BJ (cell line): ENCODE measurements at regions of chr6 and their contacts with region 1.

Region 1: DNA sequence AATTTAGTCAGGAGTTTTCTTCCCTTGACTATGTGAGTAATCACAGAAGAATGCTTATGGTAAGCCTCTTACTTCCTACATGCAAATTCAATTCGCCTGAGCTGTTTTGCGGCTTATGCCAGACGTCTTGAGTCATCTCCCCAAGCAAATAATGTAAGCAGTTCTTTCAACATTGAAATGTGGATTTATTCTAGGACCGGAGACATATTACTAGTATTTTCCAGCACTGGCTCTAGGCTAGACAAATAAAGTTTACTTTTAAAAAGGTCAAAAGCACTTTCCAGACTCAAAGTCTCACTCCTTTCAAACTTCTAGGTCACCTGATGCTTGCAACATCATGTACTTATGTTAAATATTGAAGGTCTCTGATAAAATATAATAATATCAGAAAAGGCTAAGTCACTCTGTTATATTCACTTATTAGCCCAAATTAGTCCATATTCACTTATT is 38.1 kb upstream of the NOX3 start:
- DNase-seq: peak; percentile 98
- H3K4me3 ChIP-seq: no peak overlapping the region
- H3K27me3 ChIP-seq: no peaks in the 10 kb centered on the region
- CTCF ChIP-seq: no peak

Region 2: DNA sequence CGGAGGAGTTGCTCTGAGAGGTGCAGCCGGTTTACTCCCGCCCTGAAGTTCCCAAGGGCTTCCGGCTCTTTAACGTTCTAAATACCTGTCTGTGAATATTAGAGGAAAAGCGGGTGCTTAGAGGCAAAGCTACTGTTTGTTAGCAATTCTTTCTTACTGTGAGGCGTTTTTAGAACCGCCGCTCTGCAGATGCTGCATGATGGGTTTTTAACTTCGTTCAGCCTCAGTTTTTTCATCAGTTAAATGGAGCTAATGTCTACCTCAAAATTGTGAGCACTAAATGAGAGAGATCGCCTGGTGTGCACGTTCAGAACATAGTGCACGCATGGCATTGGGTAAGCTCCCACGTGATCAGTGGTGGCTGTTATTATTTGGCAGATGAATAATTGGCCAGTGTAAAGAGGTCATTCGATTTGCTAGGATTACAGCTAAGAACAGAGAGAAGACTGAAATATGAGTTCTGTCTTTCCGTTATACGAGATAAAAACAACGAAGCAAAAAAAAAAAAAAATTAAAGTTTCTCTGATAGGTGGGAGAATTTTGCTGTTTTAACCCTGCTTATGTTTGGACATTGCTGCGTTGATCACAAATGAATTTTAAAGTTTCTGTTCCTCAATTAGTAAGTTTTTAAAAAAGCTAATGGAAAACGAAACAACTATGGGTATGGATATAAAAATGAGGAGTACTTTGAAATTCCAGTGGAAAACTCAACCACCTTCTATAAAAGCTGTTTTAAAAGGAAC is 178.8 kb before region 1 on chr6:
- CTCF ChIA-PET with region 1: interaction called, 14 read pairs
- POLR2A ChIA-PET with region 1: no interaction called
- DNase-seq: peak; percentile 37
- H3K4me3 ChIP-seq: peak overlapping the region; percentile 75
- H3K27me3 ChIP-seq: no peaks in the 10 kb centered on the region
- CTCF ChIP-seq: no peak

Region 3: DNA sequence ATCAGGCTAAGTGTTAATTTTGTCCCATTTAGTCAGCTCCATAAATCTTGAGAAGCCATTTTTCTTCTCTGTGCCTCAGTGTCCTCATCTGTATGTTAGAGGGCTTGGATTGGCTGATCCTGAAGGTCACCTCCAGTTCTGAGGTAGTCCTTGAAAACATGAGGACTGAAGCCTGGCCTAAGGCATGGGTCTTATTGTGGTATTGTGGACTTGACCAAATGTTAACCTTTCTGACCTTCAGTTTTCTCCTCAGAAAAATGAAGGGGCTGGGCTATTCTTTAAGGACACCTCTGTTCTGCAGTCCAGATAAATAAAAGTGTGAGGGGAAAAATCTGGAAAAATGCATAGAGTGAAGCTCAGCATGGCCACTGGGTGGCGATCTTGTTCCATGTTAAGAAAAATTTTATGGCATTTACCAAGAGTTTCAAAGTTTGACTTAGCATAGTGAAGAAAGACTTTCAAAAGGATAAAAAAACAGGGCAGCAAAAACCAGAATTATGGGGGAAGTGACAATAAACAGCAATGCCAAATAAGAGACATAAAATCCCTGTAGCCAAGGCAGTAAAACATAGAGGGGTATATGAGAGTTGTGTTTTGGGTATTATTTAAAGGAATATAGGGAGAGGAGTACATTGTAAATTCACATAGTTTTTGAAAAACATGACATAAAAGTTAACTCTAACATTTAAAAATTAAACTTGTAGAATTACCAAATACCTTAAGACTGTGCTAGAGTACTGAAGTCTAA is 166.2 kb before region 1 on chr6:
- CTCF ChIA-PET with region 1: interaction called, 75 read pairs
- POLR2A ChIA-PET with region 1: no interaction called
- DNase-seq: no peak
- H3K4me3 ChIP-seq: no peak overlapping the region
- H3K27me3 ChIP-seq: no peaks in the 10 kb centered on the region
- CTCF ChIP-seq: peak; percentile 72

Region 4: DNA sequence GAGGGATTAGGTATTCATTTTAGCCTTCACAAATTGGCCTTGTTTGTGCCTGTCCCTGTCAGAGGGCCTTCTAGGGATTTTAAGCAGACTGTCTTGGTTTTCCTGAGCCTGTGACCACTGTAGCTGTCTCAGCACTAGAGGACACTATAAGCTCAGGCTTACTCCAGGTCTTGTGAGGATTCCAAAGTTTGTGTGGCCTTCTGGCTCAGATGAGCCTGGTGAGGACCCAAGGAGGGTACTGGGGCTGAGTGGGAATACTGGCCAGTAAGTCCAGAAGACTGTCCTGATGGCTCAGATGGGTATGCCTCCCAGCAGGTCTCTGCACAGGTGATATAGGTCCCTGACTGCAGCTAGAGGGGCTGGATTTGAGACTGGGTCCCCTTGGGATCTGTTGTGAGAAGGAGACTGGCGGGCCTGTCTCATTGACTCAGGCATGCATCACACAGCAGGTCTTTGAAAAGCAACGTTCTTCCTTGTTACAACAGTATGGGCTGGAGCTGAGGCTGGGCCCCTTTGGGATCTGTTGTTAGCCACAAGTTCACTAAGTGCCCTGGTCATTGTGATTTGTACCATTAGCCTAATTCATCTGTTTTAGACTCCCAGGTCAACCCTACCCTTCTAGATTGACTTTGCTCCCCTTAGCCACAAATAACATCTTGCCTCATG is 153.1 kb before region 1 on chr6:
- CTCF ChIA-PET with region 1: interaction called, 18 read pairs
- POLR2A ChIA-PET with region 1: no interaction called
- DNase-seq: no peak
- H3K4me3 ChIP-seq: no peak overlapping the region
- H3K27me3 ChIP-seq: no peaks in the 10 kb centered on the region
- CTCF ChIP-seq: peak; percentile 57

Region 5: DNA sequence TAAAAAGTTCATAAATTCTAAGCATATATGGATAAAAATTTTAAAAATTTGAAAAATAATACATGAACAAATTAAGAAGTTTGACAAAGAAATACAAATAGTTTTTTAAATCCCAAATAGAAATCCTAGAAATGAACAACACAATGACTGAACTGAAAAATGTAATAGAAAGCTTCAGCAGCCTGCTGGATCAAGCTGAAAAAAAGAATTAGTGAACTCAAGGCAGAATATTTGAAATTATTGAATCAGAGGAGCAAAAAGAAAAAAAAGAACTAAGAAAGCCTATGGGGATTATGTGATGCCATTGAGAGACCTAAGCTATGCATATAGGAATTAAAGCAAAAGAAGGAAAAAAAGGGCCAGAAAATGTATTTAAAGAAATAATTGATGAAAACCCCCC is 139.6 kb before region 1 on chr6:
- CTCF ChIA-PET with region 1: no interaction called
- POLR2A ChIA-PET with region 1: no interaction called
- DNase-seq: no peak
- H3K4me3 ChIP-seq: no peak overlapping the region
- H3K27me3 ChIP-seq: no peaks in the 10 kb centered on the region
- CTCF ChIP-seq: no peak

Region 6: DNA sequence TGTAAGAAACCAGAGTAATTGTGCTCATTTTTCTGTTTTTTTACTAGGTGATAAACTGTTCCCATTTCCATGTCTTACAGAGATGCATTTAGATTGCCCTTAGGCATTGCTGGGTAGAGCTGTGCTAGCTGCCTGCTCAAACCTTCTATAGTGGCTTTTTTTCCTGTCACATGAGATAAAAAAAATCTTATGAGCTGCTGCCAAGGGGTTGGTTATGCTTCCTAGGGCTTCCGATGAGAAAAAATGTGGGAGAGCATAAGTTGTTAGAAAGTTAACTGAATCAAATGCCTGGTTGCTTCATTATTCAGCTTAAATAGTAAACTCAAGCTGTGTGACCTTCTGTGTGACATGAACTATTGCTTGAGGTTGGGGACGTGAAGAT is 11.9 kb after region 1 on chr6:
- CTCF ChIA-PET with region 1: interaction called, 12 read pairs
- POLR2A ChIA-PET with region 1: no interaction called
- DNase-seq: no peak
- H3K4me3 ChIP-seq: no peak overlapping the region
- H3K27me3 ChIP-seq: no peaks in the 10 kb centered on the region
- CTCF ChIP-seq: no peak